GM10248 (cell line): ENCODE measurements at regions of chr2 and their contacts with region 1.

Region 1: GRCh38 chr2:26636996-26637395 is 4.2 kb downstream of the CIB4 start:
- DNase-seq: no peak
- CTCF ChIP-seq: no peak

Region 2: GRCh38 chr2:26605195-26605998 is 31.6 kb before region 1 on chr2:
- CTCF ChIA-PET with region 1: interaction called, 11 read pairs
- POLR2A ChIA-PET with region 1: no interaction called
- DNase-seq: peak; percentile 64
- CTCF ChIP-seq: peak; percentile 74